Testis (tissue), 5 donors: ENCODE measurements at regions of chr6 and their contacts with region 1.

Region 1: DNA sequence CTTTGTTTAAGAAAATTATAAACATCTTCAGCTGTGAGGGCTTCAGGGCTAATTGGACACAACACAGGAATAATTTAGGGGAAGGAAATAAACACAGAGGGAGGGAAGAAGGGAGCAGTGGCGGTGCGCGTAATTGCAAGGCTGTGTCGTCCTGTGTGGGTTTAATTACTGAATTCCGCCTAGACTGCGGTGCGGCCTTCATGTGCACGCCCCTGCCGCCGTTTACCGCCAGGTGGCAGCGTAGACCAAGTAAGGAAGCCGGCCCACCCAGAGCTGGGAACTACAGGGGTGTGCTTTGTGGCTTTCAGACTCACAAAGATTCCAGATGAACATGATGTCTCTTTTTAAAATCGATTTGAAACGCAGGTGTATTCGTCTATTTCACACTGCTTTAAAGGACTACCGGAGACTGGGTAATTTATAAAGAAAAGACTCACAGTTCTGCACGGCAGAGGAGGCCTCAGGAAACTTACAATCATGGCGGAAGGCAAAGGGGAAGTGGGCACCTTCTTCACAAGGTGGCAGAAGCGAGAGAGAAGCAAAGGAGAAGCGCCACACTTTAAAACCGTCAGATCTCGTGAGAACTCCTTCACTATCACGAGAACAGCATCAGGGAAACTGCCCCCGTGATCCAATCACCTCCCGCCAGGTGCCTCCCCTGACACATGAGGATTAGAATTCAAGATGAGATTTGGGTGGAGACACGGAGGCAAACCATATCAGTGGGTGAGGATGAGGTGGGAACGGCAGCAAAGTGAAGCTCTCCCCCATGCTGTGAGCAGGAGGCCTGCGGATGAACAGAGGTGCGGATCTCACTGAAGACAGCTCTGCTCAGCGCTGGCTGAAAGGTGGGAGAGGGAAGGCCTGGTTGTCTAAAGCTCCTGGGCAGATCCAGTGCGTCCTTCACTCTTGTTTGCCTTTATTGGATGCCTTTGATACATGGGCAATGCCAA is 222.0 kb upstream of the PDE10A start:
- DNase-seq: peak; percentile 91
- H3K4me3 ChIP-seq: peak overlapping the region; percentile 18 to 38
- H3K27ac ChIP-seq: no peak overlapping the region
- H3K4me1 ChIP-seq: no peaks in the 10 kb centered on the region
- H3K27me3 ChIP-seq: no peaks in the 10 kb centered on the region
- CTCF ChIP-seq: peak; percentile 70 to 86 (median 74)
- POLR2A ChIP-seq: no peak

Region 2: GRCh38 chr6:166097915-166098522 is 212.9 kb after region 1 on chr6:
- intact Hi-C with region 1: loop called (anchors 5 kb)
- DNase-seq: peak; percentile 92
- H3K4me3 ChIP-seq: peak overlapping the region; percentile 22 to 36
- H3K27ac ChIP-seq: no peak overlapping the region
- H3K4me1 ChIP-seq: no peaks in the 10 kb centered on the region
- H3K27me3 ChIP-seq: no peaks in the 10 kb centered on the region
- CTCF ChIP-seq: peak; percentile 66 to 84 (median 78)
- POLR2A ChIP-seq: no peak

Region 3: GRCh38 chr6:166106076-166106686 is 221.1 kb after region 1 on chr6:
- intact Hi-C with region 1: loop called (anchors 5 kb)
- DNase-seq: peak; percentile 87
- H3K4me3 ChIP-seq: no peak overlapping the region
- H3K27ac ChIP-seq: no peak overlapping the region
- H3K4me1 ChIP-seq: no peaks in the 10 kb centered on the region
- H3K27me3 ChIP-seq: no peaks in the 10 kb centered on the region
- CTCF ChIP-seq: peak; percentile 74 to 84 (median 82)
- POLR2A ChIP-seq: no peak